Left ventricle myocardium superior (tissue), 1 donor: ENCODE measurements at regions of chr2 and their contacts with region 1.

Region 1: DNA sequence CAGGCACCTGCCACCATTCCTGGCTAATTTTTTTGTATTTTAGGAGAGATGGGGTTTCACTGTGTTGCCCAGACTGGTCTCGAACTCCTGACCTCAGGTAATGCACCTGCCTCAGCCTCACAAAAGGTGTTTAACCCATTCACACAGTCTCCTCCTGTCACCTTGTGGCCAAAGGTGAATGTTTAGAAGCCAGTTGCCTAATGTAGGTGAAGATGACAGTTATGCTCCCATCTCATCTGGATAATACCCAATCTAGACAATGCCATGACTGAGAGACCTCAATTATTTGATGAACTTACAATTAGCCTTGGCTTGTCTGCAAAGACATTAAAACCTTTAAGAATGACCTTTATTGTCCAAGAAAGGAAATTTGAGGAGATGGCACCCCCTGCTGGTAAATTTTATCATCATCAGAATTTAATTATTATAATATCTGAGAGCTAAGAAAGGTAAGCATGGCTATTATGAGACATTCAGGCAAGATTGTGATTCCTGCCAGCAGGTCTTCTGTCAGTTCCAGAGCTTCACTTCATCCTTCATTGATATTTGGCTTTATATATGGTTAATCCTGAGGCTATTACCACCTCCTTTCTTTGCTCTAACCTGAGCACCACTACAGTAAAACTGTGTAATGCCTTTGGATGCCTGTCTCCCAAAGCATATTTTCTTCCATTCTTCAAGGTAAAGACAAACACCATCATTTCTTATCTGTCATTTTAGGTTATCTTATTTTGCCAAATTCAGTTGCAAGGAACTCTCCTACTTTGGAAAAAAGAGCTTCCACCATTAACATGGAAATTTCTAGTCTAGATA is 117.6 kb downstream of the FAM124B start:
- DNase-seq: no peak
- ATAC-seq: no peak

Region 2: DNA sequence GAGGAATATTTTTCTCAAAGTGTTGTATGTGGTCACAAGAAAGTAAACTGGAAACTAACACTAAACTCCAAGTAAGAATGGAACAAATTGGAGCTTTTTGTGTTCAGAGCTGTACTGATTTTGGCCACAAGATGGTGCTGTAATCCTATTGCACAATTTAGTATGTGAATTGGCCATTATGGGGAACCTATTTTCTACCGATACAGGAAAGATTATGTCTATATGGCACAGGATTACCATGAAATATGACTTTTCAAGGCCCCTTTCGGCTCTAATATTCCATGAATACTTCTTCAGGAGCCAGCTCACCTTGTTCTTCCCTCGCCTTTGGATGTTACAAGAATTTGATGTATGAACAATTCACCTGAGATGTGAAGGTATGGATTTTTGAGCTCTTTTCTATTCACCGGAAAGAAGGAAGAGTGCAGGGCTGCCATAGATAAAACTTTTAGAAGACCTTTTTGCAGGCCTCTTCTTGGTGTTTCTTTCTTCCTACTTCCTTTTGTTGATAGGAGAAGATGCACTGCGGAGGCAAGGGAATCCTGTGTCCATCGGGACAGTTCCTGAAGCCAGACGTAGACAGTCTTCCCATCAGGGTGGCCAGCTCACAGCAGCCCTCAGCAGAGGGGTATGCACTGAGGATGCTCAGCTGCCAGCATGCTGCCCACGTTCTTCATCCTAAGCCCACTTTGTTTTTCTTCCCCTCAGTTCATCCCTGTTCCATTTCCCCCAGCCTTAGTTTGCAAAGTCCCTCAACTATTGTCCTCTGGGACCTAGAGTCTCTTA is 313.8 kb before region 1 on chr2:
- intact Hi-C with region 1: loop called (anchors 5 kb)
- DNase-seq: no peak
- ATAC-seq: peak; percentile 45

Region 3: GRCh38 chr2:223993621-223994232 is 290.6 kb before region 1 on chr2:
- intact Hi-C with region 1: loop called (anchors 1 kb)
- DNase-seq: no peak
- ATAC-seq: peak; percentile 85

Region 4: GRCh38 chr2:224098481-224099230 is 185.7 kb before region 1 on chr2:
- intact Hi-C with region 1: no loop called
- DNase-seq: peak; percentile 61
- ATAC-seq: peak; percentile 56